ENCODE measurements at regions of chr1 and their contacts with region 1.

Region 1: GRCh38 chr1:65431111-65431705 is 10.7 kb downstream of the LEPR start:
- DNase-seq: peak; percentile 60
- H3K4me3 Mint-ChIP-seq: peak overlapping the region; percentile 76
- H3K27ac Mint-ChIP-seq: peak overlapping the region; percentile 93
- H3K4me1 Mint-ChIP-seq: peaks cover 44% of the 10 kb centered on the region
- H3K27me3 Mint-ChIP-seq: no peaks in the 10 kb centered on the region
- CTCF ChIP-seq: peak; percentile 44

Region 2: GRCh38 chr1:64343105-64343887 is 1087.9 kb before region 1 on chr1:
- CTCF ChIA-PET with region 1: no interaction called
- POLR2A ChIA-PET with region 1: no interaction called
- intact Hi-C with region 1: no loop called
- DNase-seq: peak; percentile 97
- H3K4me3 Mint-ChIP-seq: peak overlapping the region; percentile 33
- H3K27ac Mint-ChIP-seq: peak overlapping the region; percentile 83
- H3K4me1 Mint-ChIP-seq: peaks cover 30% of the 10 kb centered on the region
- H3K27me3 Mint-ChIP-seq: no peaks in the 10 kb centered on the region
- CTCF ChIP-seq: no peak

Region 3: DNA sequence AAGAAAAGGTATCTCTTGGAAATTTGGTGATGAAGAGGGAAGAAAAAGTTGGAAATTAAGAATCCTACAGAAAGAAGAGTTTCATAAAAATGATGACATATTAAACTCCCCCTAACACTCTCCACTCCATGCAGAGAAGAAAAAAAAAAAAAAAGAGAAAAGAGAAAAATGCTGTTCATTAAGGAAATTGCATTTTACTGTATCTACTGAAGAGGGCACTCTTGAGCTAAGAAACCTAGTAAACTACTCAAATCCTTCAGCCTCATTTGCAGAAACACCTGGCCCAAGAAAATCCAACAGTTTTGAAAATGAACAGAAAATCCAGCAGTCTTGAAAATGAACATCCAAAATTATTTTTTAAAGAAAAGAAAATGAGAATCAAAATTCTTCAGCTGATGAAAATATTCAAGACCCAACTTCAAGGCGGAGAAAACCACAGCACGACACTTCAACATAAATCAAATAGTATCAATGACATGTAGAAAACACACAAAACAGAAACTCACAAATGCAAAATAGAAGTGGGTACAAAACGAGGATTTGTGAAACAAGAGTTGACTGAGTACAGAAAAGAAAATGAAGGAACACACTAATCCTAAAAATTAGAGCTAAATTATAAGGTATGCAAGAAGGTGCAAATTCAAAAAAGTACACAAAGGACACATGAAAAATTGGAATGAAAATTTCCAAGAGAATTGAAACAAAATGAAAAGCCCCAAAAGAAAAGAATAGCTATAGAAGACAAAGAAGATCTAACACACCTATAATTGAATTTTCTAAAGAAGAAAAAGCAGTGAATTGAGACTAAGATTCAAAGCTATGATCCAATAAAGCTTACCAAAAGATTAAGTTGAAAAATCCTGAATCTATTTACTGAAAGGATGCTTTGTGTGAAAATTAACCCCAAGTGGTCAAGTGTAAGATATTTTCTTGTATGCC is 195.1 kb before region 1 on chr1:
- CTCF ChIA-PET with region 1: interaction called, 6 read pairs
- POLR2A ChIA-PET with region 1: no interaction called
- intact Hi-C with region 1: loop called (anchors 5 kb)
- DNase-seq: peak; percentile 72
- H3K4me3 Mint-ChIP-seq: no peak overlapping the region
- H3K27ac Mint-ChIP-seq: no peak overlapping the region
- H3K4me1 Mint-ChIP-seq: peaks cover 2% of the 10 kb centered on the region
- H3K27me3 Mint-ChIP-seq: no peaks in the 10 kb centered on the region
- CTCF ChIP-seq: peak; percentile 68

Region 4: GRCh38 chr1:65386439-65386838 is 44.8 kb before region 1 on chr1:
- CTCF ChIA-PET with region 1: no interaction called
- POLR2A ChIA-PET with region 1: no interaction called
- intact Hi-C with region 1: no loop called
- DNase-seq: no peak
- H3K4me3 Mint-ChIP-seq: no peak overlapping the region
- H3K27ac Mint-ChIP-seq: no peak overlapping the region
- H3K4me1 Mint-ChIP-seq: no peaks in the 10 kb centered on the region
- H3K27me3 Mint-ChIP-seq: no peaks in the 10 kb centered on the region
- CTCF ChIP-seq: no peak

Region 5: GRCh38 chr1:65623895-65624294 is 192.7 kb after region 1 on chr1:
- CTCF ChIA-PET with region 1: no interaction called
- POLR2A ChIA-PET with region 1: no interaction called
- intact Hi-C with region 1: loop called (anchors 10 kb)
- DNase-seq: no peak
- H3K4me3 Mint-ChIP-seq: no peak overlapping the region
- H3K27ac Mint-ChIP-seq: no peak overlapping the region
- H3K4me1 Mint-ChIP-seq: no peaks in the 10 kb centered on the region
- H3K27me3 Mint-ChIP-seq: no peaks in the 10 kb centered on the region
- CTCF ChIP-seq: no peak

Region 6: GRCh38 chr1:65650682-65651081 is 219.5 kb after region 1 on chr1:
- CTCF ChIA-PET with region 1: no interaction called
- POLR2A ChIA-PET with region 1: no interaction called
- intact Hi-C with region 1: no loop called
- DNase-seq: no peak
- H3K4me3 Mint-ChIP-seq: no peak overlapping the region
- H3K27ac Mint-ChIP-seq: no peak overlapping the region
- H3K4me1 Mint-ChIP-seq: no peaks in the 10 kb centered on the region
- H3K27me3 Mint-ChIP-seq: peaks cover 40% of the 10 kb centered on the region
- CTCF ChIP-seq: no peak